ENCODE measurements at regions of chr7 and their contacts with region 1.

Region 1: DNA sequence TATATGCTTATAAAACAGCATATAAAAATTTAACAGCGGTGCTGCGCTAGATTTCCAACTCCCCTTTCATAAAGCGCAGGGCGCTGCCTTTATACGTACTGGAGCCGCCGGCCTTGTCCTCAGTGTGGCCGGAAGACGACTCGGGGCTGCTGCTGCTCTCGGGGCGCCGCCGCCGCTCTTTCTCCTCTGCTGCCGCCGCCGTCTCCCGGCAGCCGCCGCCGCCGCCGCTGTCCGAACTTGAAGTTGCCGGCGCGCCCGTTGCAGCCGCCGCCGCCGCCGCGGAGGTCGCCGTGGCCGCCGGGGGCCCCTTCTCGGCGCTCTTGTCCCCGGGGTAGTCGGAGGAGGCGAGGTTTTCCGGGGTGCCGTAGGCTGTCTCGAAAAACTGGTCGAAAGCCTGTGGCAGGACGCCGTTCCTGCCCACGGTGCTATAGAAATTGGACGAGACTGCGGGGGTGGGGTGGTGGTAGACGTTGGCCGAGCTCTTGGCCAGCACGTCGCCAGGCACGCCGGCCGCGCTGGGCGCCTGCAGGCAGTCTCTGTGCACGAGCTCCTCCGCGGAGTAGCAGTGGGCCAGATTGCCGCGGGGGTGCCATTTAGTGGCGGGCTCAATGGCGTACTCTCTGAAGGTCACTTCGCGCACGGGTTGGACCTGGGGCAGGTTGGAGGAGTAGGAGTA is 557 bp downstream of the HOXA11 start:
- DNase-seq: peak; percentile 29 to 55
- ATAC-seq: peak; percentile 46 to 57 (median 46)
- H3K4me3 ChIP-seq: peak overlapping the region; percentile 30
- H3K4me3 Mint-ChIP-seq: peak overlapping the region; percentile 81
- H3K27ac ChIP-seq: no peak overlapping the region
- H3K27ac Mint-ChIP-seq: peak overlapping the region; percentile 31 to 58
- H3K4me1 ChIP-seq: peaks cover 61% of the 10 kb centered on the region
- H3K4me1 Mint-ChIP-seq: peaks cover 44 to 55% of the 10 kb centered on the region in 2 donors
- H3K27me3 ChIP-seq: peaks cover 89% of the 10 kb centered on the region
- H3K27me3 Mint-ChIP-seq: peaks cover 73 to 80% of the 10 kb centered on the region in 2 donors
- CTCF ChIP-seq: no peak

Region 2: DNA sequence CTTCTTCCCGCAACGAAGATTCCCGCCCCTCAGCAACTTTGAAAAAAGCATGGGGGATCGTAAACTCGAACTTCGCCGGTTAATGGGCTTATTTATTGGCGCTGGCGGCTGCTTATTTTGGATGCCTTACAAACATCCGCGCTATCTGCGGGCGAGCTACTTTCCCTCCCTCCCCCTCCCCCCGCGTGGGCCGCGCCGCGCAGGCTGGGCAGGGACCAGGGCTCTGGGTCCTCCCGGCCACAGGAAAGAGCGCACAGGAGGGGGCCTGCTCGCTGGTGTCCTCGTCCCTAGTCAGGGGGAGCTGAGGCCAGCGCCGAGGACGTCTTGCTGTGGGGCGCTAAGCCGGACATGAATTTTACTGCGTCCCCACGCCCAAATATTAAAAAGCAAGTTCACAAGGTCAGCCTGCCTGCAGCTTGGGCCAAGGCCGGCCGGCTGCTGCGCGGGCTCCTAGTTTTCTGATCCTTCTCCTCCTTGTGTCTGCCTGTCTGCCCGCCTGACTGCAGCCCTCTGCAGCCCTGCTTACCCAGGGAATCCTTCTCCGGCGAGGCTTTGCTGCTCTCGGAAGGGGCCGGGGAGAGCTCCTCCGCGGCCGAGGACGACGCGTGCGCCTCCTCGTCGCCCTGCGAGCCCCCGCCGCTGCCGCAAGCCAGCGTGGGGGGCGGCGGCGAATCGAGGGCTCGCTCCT is 11.5 kb before region 1 on chr7:
- intact Hi-C with region 1: loop called (anchors 2 kb)
- DNase-seq: peak in 1 of 2 donors; percentile 53
- ATAC-seq: peak; percentile 11 to 43 (median 22)
- H3K4me3 ChIP-seq: peak overlapping the region; percentile 49
- H3K4me3 Mint-ChIP-seq: peak overlapping the region; percentile 87
- H3K27ac ChIP-seq: peak overlapping the region; percentile 23
- H3K27ac Mint-ChIP-seq: peak overlapping the region in 1 of 2 donors; percentile 9
- H3K4me1 ChIP-seq: peaks cover 53% of the 10 kb centered on the region
- H3K4me1 Mint-ChIP-seq: peaks cover 26 to 32% of the 10 kb centered on the region in 2 donors
- H3K27me3 ChIP-seq: peaks cover 69% of the 10 kb centered on the region
- H3K27me3 Mint-ChIP-seq: peaks cover 52 to 60% of the 10 kb centered on the region in 2 donors
- CTCF ChIP-seq: no peak